ENCODE measurements at regions of chr13 and their contacts with region 1.

Region 1: DNA sequence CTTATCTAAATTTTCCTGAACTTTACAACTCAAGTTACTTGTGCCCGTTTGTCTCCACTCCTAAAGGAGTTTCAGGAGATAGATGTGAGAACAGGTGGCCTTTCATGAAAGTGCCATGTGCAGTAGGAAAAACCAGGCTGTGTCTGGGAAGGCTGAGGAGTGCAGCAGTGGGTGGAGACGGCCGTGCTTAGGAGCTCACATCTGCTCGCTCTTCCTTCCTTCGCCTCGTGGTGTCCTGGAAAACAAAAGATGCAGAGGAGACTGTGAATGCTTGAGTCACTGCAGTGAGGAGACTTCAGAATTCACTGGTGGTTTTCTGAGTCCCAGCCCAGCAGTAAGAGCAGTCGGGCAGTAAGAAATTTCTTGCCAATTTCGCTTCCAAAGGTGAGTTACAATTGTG is 138.4 kb upstream of the RNF113B start:
- DNase-seq: no peak
- H3K4me3 ChIP-seq: no peak overlapping the region
- H3K27ac ChIP-seq: no peak overlapping the region
- H3K4me1 ChIP-seq: peaks cover 0 to 16% (median 13%) of the 10 kb centered on the region in 4 experiments; a peak in 5 of 7 replicates
- H3K27me3 ChIP-seq: no peaks in the 10 kb centered on the region
- CTCF ChIP-seq: no peak
- EP300 ChIP-seq: no peak
- POLR2A ChIP-seq: no peak
- RAD21 ChIP-seq: no peak

Region 2: DNA sequence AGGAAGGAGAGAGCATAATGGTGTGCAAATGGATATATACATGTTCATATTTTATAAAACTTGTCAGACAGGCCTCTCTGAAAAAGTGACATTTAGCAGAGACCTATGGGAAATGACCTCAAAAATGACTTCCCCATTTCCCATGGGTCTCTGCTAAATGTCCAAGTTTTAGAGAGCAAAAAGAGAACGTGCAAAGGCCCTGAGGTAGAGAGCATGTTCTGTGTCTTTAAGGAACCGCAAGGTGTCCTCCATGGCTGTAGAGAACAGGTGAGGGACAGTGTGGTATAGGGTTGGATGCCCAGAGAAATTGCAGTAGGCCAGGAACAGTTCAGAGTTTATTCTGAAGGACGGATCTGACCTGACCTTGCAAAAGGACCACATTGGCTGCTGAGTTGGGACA is 25.2 kb before region 1 on chr13:
- CTCF ChIA-PET with region 1: no interaction called
- POLR2A ChIA-PET with region 1: no interaction called
- DNase-seq: no peak
- H3K4me3 ChIP-seq: no peak overlapping the region
- H3K27ac ChIP-seq: no peak overlapping the region
- H3K4me1 ChIP-seq: peaks cover 4 to 9% (median 6%) of the 10 kb centered on the region in 4 experiments
- H3K27me3 ChIP-seq: no peaks in the 10 kb centered on the region
- CTCF ChIP-seq: no peak
- EP300 ChIP-seq: no peak
- POLR2A ChIP-seq: no peak
- RAD21 ChIP-seq: no peak

Region 3: DNA sequence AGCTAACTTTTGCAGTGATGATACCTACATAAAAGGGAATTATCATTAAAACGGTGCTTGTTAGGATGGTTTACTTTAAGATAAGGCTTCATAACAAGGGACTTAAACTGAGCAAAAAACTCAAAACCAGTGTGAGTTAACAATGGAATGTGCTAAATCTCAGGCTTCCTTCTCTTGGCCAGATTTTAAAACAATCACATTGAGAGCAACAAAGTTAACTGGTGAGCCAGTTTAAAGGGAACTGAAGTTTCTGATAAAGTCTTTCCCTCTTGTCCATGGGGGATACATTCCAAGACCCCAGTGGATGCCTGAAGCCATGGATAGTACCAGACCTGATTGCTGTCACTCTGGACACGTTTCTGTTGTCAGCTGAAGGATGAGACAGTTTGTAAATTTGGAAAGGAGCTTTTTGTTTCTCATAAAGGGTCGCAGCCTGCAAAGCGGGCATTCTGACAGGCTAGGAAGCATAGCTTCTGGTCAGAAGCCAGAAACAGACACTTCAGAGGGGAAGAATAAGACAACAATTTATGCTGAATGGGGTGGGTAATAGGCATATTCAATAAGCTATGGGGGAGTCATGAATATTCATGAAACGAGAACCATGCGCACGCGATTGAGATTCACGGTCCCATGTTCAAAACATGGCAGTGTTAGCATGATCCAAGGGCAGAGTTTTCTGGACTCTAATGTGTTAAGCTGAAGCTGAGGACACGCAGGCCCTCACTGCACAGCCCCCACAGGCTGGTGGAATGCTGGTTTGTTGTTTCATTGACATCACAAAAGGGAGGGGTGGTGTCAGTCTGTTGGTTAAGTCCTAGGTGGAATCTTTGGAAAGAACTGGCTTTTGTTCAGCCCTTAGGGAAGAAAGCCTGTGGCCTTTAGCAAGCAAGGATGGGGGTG is 12.2 kb after region 1 on chr13:
- CTCF ChIA-PET with region 1: interaction called, 22 read pairs
- POLR2A ChIA-PET with region 1: interaction called, 4 read pairs
- DNase-seq: peak in 1 of 2 experiments; percentile 43
- H3K4me3 ChIP-seq: peak overlapping the region in 3 of 4 experiments; percentile 17 to 45 (median 19); a peak in 4 of 8 replicates
- H3K27ac ChIP-seq: peak overlapping the region; percentile 68
- H3K4me1 ChIP-seq: peaks cover 6 to 49% (median 30%) of the 10 kb centered on the region in 4 experiments; a peak in 6 of 7 replicates
- H3K27me3 ChIP-seq: no peaks in the 10 kb centered on the region
- CTCF ChIP-seq: no peak
- EP300 ChIP-seq: peak in 1 of 2 experiments; percentile 41; a peak in 1 of 3 replicates
- POLR2A ChIP-seq: no peak
- RAD21 ChIP-seq: 0 out of 4 replicates have a peak, but pooled peaks of 1 of the 2 experiments have one; percentile 11